ENCODE measurements at regions of chr1 and their contacts with region 1.

Region 1: GRCh38 chr1:46369542-46370213 is 24.4 kb upstream of the FAAH start:
- DNase-seq: no peak

Region 2: GRCh38 chr1:46223472-46223943 is 146.2 kb before region 1 on chr1:
- intact Hi-C with region 1: no loop called
- DNase-seq: peak; percentile 54 to 93 (median 80)

Region 3: DNA sequence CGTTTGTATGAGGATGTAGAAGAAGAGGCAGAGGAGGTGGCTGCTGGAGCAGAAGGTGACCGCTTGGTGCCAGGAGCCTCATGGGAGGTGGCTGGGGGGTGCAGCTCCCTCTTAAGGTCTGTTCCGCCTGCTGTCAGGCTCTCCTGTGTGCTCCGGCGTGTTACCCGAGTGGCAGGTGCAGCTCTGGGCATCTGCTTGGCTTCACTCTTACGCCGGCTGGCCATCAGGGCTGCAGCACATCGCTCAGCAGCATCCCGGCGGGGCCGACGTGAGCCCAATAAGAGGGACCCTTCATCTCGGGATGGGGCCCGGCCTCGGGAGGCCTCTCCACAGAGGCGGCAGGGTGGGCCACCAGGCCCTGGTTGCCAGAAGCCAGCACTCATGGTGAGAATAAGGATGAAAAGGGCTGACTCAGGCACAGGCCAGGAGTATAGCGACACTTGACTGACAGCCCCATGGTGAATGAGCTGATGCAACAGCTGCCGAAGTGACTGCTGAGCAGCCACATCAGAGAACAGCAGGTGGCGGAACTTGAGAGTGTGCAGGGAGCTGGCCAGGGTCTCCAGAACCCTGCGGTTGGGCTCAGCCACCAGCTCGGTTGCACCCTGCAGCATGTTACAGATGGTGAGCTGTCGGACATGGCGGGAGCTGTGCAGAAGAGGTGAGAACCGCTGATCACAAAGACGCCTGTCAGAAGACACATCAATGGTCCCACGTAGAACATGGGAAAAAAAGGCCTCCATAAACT is 83.8 kb before region 1 on chr1:
- intact Hi-C with region 1: no loop called
- DNase-seq: no peak

Region 4: DNA sequence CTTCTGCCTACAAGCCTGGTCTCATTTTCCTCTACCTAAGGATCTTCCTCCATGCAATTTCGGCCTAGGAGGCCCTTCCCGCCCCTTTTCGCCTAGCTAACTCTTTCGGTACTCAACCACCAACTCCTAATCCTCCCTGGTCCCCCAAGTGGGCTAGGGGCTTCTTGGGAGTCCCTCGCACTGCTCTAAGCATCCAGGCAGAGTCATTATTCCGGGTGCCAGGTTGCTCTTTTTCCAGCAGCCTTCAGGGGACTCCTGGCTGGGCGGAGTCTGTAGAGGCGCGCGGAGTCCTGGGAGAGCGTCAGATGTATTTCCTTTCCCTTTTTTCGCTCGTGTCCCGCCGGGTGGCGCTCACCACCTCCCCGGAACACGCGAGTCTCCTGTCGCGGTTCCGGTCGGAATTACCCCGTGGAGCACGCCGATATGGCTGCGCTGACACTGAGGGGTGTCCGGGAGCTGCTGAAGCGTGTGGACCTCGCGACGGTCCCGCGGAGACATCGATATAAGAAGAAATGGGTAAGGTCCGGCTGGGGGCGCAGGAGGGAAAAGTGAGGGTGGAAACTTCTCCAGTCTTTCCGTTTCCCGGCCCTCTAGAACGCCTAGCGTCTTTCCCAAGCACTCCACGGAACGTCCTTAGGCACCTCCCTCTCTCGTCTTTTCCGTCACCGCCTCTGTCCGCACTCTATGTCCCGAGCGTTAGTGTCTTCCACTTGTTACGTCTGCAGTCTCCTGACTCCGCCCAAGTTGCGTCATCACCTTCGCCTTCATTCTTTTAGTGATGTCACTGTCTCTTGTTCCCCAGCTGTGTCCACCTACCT is 29.1 kb before region 1 on chr1 and contains the start of gene NSUN4:
- intact Hi-C with region 1: loop called (anchors 2 kb)
- DNase-seq: peak; percentile 88 to 98 (median 93)

Region 5: GRCh38 chr1:46423574-46424240 is 54.0 kb after region 1 on chr1:
- intact Hi-C with region 1: no loop called
- DNase-seq: peak in 1 of 42 donors; percentile 47